ENCODE measurements at regions of chr6 and their contacts with region 1.

Region 1: GRCh38 chr6:28489366-28490204 is 26.0 kb downstream of the GPX6 start:
- DNase-seq: peak; percentile 73 to 91
- ATAC-seq: peak; percentile 96 to 98
- H3K4me3 ChIP-seq: peak overlapping the region; percentile 62
- H3K27ac ChIP-seq: peak overlapping the region; percentile 85 to 93
- H3K4me1 ChIP-seq: peaks cover 4% of the 10 kb centered on the region; the same call in 2 of the 3 replicates
- CTCF ChIP-seq: no peak
- EP300 ChIP-seq: no peak
- POLR2A ChIP-seq: peak; percentile 53
- RAD21 ChIP-seq: no peak

Region 2: DNA sequence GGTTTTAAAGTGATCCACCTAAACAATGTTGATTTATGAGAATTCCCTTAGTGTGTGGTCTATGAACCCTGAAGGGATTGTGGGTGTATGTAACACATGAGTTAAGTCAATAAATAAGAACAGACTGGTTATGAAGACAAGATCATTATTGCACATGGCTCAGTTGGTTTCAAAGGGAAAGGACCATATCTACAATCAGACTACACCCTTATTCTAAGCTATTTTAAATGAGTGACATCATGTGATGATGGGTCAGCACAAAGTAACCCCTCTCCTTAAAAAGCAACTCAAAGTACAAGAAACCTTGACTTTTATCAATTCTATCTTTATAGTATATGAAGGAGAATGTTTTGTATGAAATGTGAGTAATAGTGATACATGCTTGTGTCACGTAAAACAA is 31.0 kb before region 1 on chr6:
- CTCF ChIA-PET with region 1: no interaction called
- POLR2A ChIA-PET with region 1: no interaction called
- DNase-seq: no peak
- ATAC-seq: no peak
- H3K4me3 ChIP-seq: no peak overlapping the region
- H3K27ac ChIP-seq: no peak overlapping the region
- H3K4me1 ChIP-seq: no peaks in the 10 kb centered on the region
- CTCF ChIP-seq: no peak
- EP300 ChIP-seq: no peak
- POLR2A ChIP-seq: no peak
- RAD21 ChIP-seq: no peak

Region 3: DNA sequence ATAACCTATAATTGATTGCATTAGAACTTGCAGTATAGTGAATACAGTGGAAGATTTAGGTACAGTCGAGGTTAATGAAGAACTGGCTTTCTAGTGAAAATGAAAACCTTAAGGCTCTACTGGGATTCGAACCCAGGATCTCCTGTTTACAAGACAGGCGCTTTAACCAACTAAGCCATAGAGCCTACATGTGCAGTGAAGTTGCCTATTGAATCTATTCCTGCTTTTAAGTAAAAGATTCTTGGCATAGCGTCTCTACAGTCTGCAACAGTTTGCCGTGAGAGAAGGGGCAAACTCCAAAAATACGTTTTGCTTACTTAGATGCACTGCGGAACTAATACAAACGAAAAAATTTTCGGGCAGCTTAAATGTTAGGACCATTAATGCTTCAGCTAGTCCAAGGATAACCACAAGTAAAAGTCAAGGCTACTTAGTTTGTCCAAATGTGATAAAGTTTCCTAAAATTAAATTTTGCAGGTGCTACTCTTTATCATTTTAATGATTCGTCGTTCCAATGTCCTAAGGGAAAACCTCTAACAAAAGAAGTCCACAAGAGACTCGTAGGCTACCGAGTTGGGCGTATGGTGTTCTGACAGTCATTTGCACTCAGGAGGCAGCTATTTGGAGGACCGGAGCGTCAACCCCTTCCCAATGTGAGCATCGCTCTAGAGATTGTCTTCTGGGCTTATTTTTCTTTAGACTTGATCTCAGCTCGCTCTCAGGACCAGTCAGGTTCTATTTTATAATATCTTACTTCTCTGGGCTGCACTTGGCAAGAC is 15.0 kb before region 1 on chr6:
- CTCF ChIA-PET with region 1: interaction called, 3 read pairs
- POLR2A ChIA-PET with region 1: interaction called, 14 read pairs
- DNase-seq: peak; percentile 38 to 86
- ATAC-seq: peak; percentile 96 to 98
- H3K4me3 ChIP-seq: peak overlapping the region; percentile 55
- H3K27ac ChIP-seq: no peak overlapping the region
- H3K4me1 ChIP-seq: no peaks in the 10 kb centered on the region
- CTCF ChIP-seq: no peak
- EP300 ChIP-seq: no peak
- POLR2A ChIP-seq: no peak
- RAD21 ChIP-seq: no peak

Region 4: GRCh38 chr6:28824793-28825731 is 335.5 kb after region 1 on chr6:
- CTCF ChIA-PET with region 1: no interaction called
- POLR2A ChIA-PET with region 1: no interaction called
- DNase-seq: no peak
- ATAC-seq: peak in 1 of 2 experiments; percentile 40; a peak in 1 of 6 replicates
- H3K4me3 ChIP-seq: 0 out of 3 replicates have a peak overlapping the region, but pooled peaks have one; percentile 5
- H3K27ac ChIP-seq: no peak overlapping the region
- H3K4me1 ChIP-seq: no peaks in the 10 kb centered on the region
- CTCF ChIP-seq: no peak
- EP300 ChIP-seq: no peak
- POLR2A ChIP-seq: no peak
- RAD21 ChIP-seq: no peak

Measured in A549 (cell line).